ENCODE measurements at regions of chr1 and their contacts with region 1.

Region 1: GRCh38 chr1:15870421-15870820 is 22.9 kb downstream of the SPEN start:
- DNase-seq: no peak
- ATAC-seq: no peak
- H3K4me3 ChIP-seq: no peak overlapping the region
- H3K27ac ChIP-seq: no peak overlapping the region
- H3K4me1 ChIP-seq: peaks cover 0 to 61% (median 30%) of the 10 kb centered on the region in 9 donors
- H3K27me3 ChIP-seq: no peaks in the 10 kb centered on the region
- CTCF ChIP-seq: no peak

Region 2: GRCh38 chr1:15856888-15857287 is 13.5 kb before region 1 on chr1:
- intact Hi-C with region 1: loop called in 1 of 10 experiments (anchors 1 kb)
- DNase-seq: no peak
- ATAC-seq: no peak
- H3K4me3 ChIP-seq: no peak overlapping the region
- H3K27ac ChIP-seq: no peak overlapping the region
- H3K4me1 ChIP-seq: peaks cover 0 to 72% (median 38%) of the 10 kb centered on the region in 9 donors
- H3K27me3 ChIP-seq: no peaks in the 10 kb centered on the region
- CTCF ChIP-seq: no peak